Posterior vena cava (tissue), 2 donors: ENCODE measurements at regions of chrX and their contacts with region 1.

Region 1: GRCh38 chrX:68196939-68197791 is 236.1 kb downstream of the OPHN1 start:
- DNase-seq: no peak

Region 2: GRCh38 chrX:67684136-67684535 is 513.0 kb before region 1 on chrX:
- intact Hi-C with region 1: no loop called
- DNase-seq: no peak

Region 3: GRCh38 chrX:68177542-68177941 is 19.6 kb before region 1 on chrX:
- intact Hi-C with region 1: loop called in 1 of 2 experiments (anchors 1 kb)
- DNase-seq: no peak

Region 4: DNA sequence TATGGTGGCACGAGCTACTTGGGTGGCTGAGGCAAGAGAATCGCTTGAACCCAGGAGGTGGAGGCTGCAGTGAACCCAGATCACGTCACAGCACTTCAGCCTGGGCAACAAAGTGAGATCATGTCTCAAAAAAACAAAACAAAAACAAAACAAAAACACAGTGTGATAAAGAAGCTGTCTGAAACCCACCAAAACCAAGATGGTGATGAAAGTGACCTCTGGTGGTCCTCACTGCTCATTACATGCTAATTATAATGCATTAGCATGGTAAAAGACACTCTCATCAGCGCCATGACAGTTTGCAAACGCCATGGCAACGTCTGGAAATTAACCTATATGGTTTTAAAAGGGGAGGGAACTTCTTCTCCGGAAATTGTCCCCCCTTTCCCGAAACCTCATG is 265.5 kb after region 1 on chrX:
- intact Hi-C with region 1: loop called in 1 of 2 experiments (anchors 10 kb)
- DNase-seq: no peak

Region 5: GRCh38 chrX:68710870-68711576 is 513.9 kb after region 1 on chrX:
- intact Hi-C with region 1: loop called in 1 of 2 experiments (anchors 10 kb)
- DNase-seq: no peak